Vagina (tissue), 2 donors: ENCODE measurements at regions of chrX and their contacts with region 1.

Region 1: DNA sequence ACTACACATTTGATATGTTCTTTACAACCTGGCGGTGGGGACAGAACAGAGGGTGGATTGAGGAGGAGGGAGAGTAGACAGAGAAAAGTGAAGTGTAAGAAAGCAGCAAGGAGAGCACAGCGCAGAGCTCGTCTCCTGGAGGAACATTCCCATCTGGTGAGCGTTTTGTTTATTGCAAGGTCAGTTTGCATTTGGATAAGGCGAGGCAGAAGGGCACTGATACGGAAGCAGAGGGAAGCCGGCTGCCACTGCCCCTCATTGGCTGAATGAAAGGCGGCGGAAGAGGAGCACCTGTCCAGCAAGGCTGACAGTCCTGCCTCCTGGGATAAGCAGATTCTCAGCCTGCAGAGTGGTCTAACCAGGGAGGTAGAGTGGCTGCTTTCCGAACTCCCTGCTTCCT is 83.2 kb downstream of the GPR143 start:
- DNase-seq: no peak
- H3K4me3 ChIP-seq: no peak overlapping the region
- H3K27ac ChIP-seq: no peak overlapping the region
- H3K4me1 ChIP-seq: no peaks in the 10 kb centered on the region
- H3K27me3 ChIP-seq: no peaks in the 10 kb centered on the region
- CTCF ChIP-seq: no peak
- POLR2A ChIP-seq: no peak

Region 2: DNA sequence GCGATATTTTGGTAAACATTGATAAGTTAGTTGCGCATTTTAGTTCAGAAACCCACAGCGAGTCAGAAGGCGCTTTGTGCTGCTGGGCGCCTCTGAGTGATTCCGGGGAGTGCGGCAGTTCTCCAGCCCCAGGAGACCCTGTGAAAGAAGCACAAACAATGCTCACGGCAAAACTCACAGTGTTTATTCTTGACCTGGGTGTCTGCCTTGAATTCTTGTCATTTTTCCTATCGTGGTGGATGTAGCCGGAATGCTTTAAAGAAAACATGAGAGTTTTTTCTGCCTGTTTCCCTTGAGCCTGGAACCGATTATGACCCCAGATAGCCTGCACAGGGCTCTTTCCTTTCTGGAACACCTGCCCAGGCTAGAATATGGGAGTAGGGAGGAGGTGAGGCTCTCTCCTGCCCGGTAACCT is 210.9 kb before region 1 on chrX:
- intact Hi-C with region 1: loop called (anchors 5 kb)
- DNase-seq: no peak
- H3K4me3 ChIP-seq: no peak overlapping the region
- H3K27ac ChIP-seq: no peak overlapping the region
- H3K4me1 ChIP-seq: peaks cover 24% of the 10 kb centered on the region
- H3K27me3 ChIP-seq: no peaks in the 10 kb centered on the region
- CTCF ChIP-seq: no peak
- POLR2A ChIP-seq: no peak